Caco-2 (cell line): ENCODE measurements at regions of chr11 and their contacts with region 1.

Region 1: GRCh38 chr11:45180179-45180842 is 33.9 kb downstream of the PRDM11 start:
- DNase-seq: peak; percentile 68 to 79
- H3K4me3 ChIP-seq: peak overlapping the region; percentile 32
- H3K4me3 Mint-ChIP-seq: peak overlapping the region; percentile 76
- H3K27ac Mint-ChIP-seq: no peak overlapping the region
- H3K4me1 ChIP-seq: peaks cover 31% of the 10 kb centered on the region
- H3K4me1 Mint-ChIP-seq: no peaks in the 10 kb centered on the region
- H3K27me3 ChIP-seq: no peaks in the 10 kb centered on the region
- H3K27me3 Mint-ChIP-seq: no peaks in the 10 kb centered on the region
- CTCF ChIP-seq: peak in 1 of 2 experiments; percentile 74

Region 2: GRCh38 chr11:45147017-45147728 is 33.1 kb before region 1 on chr11:
- CTCF ChIA-PET with region 1: no interaction called
- POLR2A ChIA-PET with region 1: interaction called, 3 read pairs
- intact Hi-C with region 1: loop called (anchors 1 kb)
- DNase-seq: peak; percentile 96 to 97
- H3K4me3 ChIP-seq: peak overlapping the region; percentile 73
- H3K4me3 Mint-ChIP-seq: peak overlapping the region; percentile 72
- H3K27ac Mint-ChIP-seq: peak overlapping the region; percentile 64
- H3K4me1 ChIP-seq: no peaks in the 10 kb centered on the region
- H3K4me1 Mint-ChIP-seq: no peaks in the 10 kb centered on the region
- H3K27me3 ChIP-seq: no peaks in the 10 kb centered on the region
- H3K27me3 Mint-ChIP-seq: peaks cover 4% of the 10 kb centered on the region
- CTCF ChIP-seq: no peak

Region 3: GRCh38 chr11:45233121-45233803 is 53.0 kb after region 1 on chr11:
- CTCF ChIA-PET with region 1: interaction called, 3 read pairs
- POLR2A ChIA-PET with region 1: no interaction called
- intact Hi-C with region 1: loop called (anchors 10 kb)
- DNase-seq: peak; percentile 72 to 81
- H3K4me3 ChIP-seq: no peak overlapping the region
- H3K4me3 Mint-ChIP-seq: no peak overlapping the region
- H3K27ac Mint-ChIP-seq: no peak overlapping the region
- H3K4me1 ChIP-seq: no peaks in the 10 kb centered on the region
- H3K4me1 Mint-ChIP-seq: no peaks in the 10 kb centered on the region
- H3K27me3 ChIP-seq: no peaks in the 10 kb centered on the region
- H3K27me3 Mint-ChIP-seq: peaks cover 9% of the 10 kb centered on the region
- CTCF ChIP-seq: peak; percentile 78 to 85

Region 4: GRCh38 chr11:45285930-45286632 is 105.8 kb after region 1 on chr11 and contains the start of gene SYT13:
- CTCF ChIA-PET with region 1: no interaction called
- POLR2A ChIA-PET with region 1: no interaction called
- intact Hi-C with region 1: loop called (anchors 10 kb)
- DNase-seq: peak; percentile 66 to 79
- H3K4me3 ChIP-seq: peak within 1 kb of the TSS; percentile 54
- H3K4me3 Mint-ChIP-seq: peak within 1 kb of the TSS; percentile 61
- H3K27ac Mint-ChIP-seq: no peak within 1 kb of the TSS
- H3K4me1 ChIP-seq: peaks cover 18% of the 10 kb centered on the region
- H3K4me1 Mint-ChIP-seq: peaks cover 14% of the 10 kb centered on the region
- H3K27me3 ChIP-seq: no peaks in the 10 kb centered on the region
- H3K27me3 Mint-ChIP-seq: peaks cover 15% of the 10 kb centered on the region
- CTCF ChIP-seq: no peak
- total RNA-seq, gene SYT13: 6.0 and 9.4 TPM in 2 replicates